CD4-positive, alpha-beta T cell (primary cell): ENCODE measurements at regions of chr5 and their contacts with region 1.

Region 1: DNA sequence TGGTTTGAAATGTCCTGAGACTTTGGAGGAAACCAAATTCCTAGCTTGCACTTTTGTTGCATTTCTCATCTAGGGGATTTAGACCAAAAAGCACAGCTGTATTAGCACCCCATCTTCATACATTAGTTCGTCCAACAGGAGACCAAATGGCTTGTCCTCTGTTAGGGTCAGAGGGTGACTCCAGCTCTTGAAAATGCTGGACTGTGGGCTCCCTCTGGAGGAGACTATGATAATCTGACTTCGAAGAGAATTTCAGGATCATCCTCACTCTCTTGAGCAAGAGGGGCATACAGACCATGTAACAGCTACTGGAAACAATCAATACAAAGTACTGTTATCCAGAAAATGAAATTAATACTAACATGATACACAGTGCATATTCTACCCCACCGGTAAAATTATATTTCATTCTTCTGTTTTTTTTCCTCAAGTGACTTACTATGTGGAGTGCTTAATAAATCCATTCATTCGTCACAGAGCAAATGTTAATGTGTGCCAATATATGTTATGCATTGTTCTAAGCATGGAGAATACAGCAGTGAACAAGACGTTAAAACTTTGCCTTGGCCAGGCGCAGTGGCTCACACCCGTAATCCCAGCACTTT is 63.7 kb upstream of the PPP2CA start:
- DNase-seq: peak in 13 of 14 experiments; percentile 11 to 83 (median 23)
- ATAC-seq: peak; percentile 58
- H3K4me3 ChIP-seq: no peak overlapping the region
- H3K4me3 Mint-ChIP-seq: no peak overlapping the region
- H3K27ac ChIP-seq: no peak overlapping the region
- H3K27ac Mint-ChIP-seq: no peak overlapping the region
- H3K4me1 ChIP-seq: no peaks in the 10 kb centered on the region
- H3K4me1 Mint-ChIP-seq: no peaks in the 10 kb centered on the region
- H3K27me3 ChIP-seq: no peaks in the 10 kb centered on the region
- H3K27me3 Mint-ChIP-seq: peaks cover 10% of the 10 kb centered on the region
- CTCF ChIP-seq: peak; percentile 83

Region 2: DNA sequence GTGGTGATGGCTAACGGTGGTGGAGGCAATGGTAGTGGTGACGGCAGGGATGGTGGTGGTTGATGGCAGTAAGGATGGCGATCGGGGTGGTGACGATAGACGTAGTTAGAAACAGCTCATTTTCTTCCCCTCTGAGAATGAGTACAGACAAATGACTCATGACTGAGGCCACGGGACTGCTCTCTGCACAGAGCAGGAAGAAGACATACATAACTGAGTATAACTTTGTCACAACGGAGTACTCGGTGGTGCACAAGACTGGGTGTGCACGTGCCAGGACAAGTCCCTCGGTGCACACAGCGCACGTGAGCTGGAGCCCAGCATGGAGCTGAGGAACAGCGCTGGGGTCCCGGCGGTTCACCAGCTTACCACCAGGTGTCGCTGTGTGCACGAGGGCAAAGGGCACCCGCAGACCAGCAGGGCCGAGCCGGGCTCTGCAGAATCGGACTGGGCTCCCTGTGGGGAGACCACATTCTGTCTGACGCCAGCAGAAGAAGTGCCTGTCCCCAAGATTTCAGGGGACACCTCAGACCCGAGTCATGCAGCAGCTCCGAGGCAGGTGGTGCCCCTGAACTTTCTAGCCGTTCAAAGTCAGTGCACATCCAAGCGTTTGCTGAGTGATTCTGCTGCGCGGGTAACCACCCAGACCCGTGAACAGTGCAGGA is 865.9 kb before region 1 on chr5:
- CTCF ChIA-PET with region 1: no interaction called
- POLR2A ChIA-PET with region 1: no interaction called
- intact Hi-C with region 1: loop called in 1 of 2 experiments (anchors 5 kb)
- DNase-seq: peak; percentile 46 to 76 (median 56)
- ATAC-seq: peak; percentile 78
- H3K4me3 ChIP-seq: no peak overlapping the region
- H3K4me3 Mint-ChIP-seq: no peak overlapping the region
- H3K27ac ChIP-seq: no peak overlapping the region
- H3K27ac Mint-ChIP-seq: no peak overlapping the region
- H3K4me1 ChIP-seq: peaks cover 11% of the 10 kb centered on the region
- H3K4me1 Mint-ChIP-seq: peaks cover 9% of the 10 kb centered on the region
- H3K27me3 ChIP-seq: no peaks in the 10 kb centered on the region
- H3K27me3 Mint-ChIP-seq: no peaks in the 10 kb centered on the region
- CTCF ChIP-seq: peak; percentile 94

Region 3: GRCh38 chr5:133552931-133553525 is 736.6 kb before region 1 on chr5:
- CTCF ChIA-PET with region 1: no interaction called
- POLR2A ChIA-PET with region 1: no interaction called
- intact Hi-C with region 1: loop called in 1 of 2 experiments (anchors 10 kb)
- DNase-seq: peak; percentile 14 to 69 (median 28)
- ATAC-seq: peak; percentile 48
- H3K4me3 ChIP-seq: no peak overlapping the region
- H3K4me3 Mint-ChIP-seq: no peak overlapping the region
- H3K27ac ChIP-seq: no peak overlapping the region
- H3K27ac Mint-ChIP-seq: no peak overlapping the region
- H3K4me1 ChIP-seq: no peaks in the 10 kb centered on the region
- H3K4me1 Mint-ChIP-seq: no peaks in the 10 kb centered on the region
- H3K27me3 ChIP-seq: peaks cover 9 to 15% of the 10 kb centered on the region in 2 experiments
- H3K27me3 Mint-ChIP-seq: peaks cover 67% of the 10 kb centered on the region
- CTCF ChIP-seq: peak; percentile 64

Region 4: GRCh38 chr5:134026521-134027268 is 262.9 kb before region 1 on chr5:
- CTCF ChIA-PET with region 1: interaction called, 3 read pairs
- POLR2A ChIA-PET with region 1: interaction called, 5 read pairs
- intact Hi-C with region 1: loop called (anchors 1 kb)
- DNase-seq: peak; percentile 38 to 80 (median 50)
- ATAC-seq: peak; percentile 99
- H3K4me3 ChIP-seq: no peak overlapping the region
- H3K4me3 Mint-ChIP-seq: no peak overlapping the region
- H3K27ac ChIP-seq: no peak overlapping the region
- H3K27ac Mint-ChIP-seq: no peak overlapping the region
- H3K4me1 ChIP-seq: no peaks in the 10 kb centered on the region
- H3K4me1 Mint-ChIP-seq: peaks cover 6% of the 10 kb centered on the region
- H3K27me3 ChIP-seq: no peaks in the 10 kb centered on the region
- H3K27me3 Mint-ChIP-seq: no peaks in the 10 kb centered on the region
- CTCF ChIP-seq: peak; percentile 64

Region 5: GRCh38 chr5:134184155-134185135 is 105.2 kb before region 1 on chr5:
- CTCF ChIA-PET with region 1: interaction called, 18 read pairs
- POLR2A ChIA-PET with region 1: interaction called, 7 read pairs
- intact Hi-C with region 1: loop called (anchors 1 kb)
- DNase-seq: peak; percentile 65 to 87 (median 71)
- ATAC-seq: peak; percentile 98
- H3K4me3 ChIP-seq: no peak overlapping the region
- H3K4me3 Mint-ChIP-seq: no peak overlapping the region
- H3K27ac ChIP-seq: no peak overlapping the region
- H3K27ac Mint-ChIP-seq: no peak overlapping the region
- H3K4me1 ChIP-seq: peaks cover 6% of the 10 kb centered on the region
- H3K4me1 Mint-ChIP-seq: no peaks in the 10 kb centered on the region
- H3K27me3 ChIP-seq: no peaks in the 10 kb centered on the region
- H3K27me3 Mint-ChIP-seq: no peaks in the 10 kb centered on the region
- CTCF ChIP-seq: peak; percentile 91

Region 6: GRCh38 chr5:134240421-134240962 is 49.1 kb before region 1 on chr5:
- CTCF ChIA-PET with region 1: no interaction called
- POLR2A ChIA-PET with region 1: no interaction called
- intact Hi-C with region 1: no loop called
- DNase-seq: no peak
- ATAC-seq: no peak
- H3K4me3 ChIP-seq: no peak overlapping the region
- H3K4me3 Mint-ChIP-seq: no peak overlapping the region
- H3K27ac ChIP-seq: no peak overlapping the region
- H3K27ac Mint-ChIP-seq: no peak overlapping the region
- H3K4me1 ChIP-seq: no peaks in the 10 kb centered on the region
- H3K4me1 Mint-ChIP-seq: no peaks in the 10 kb centered on the region
- H3K27me3 ChIP-seq: no peaks in the 10 kb centered on the region
- H3K27me3 Mint-ChIP-seq: peaks cover 4% of the 10 kb centered on the region
- CTCF ChIP-seq: no peak